ENCODE measurements at regions of chr16 and their contacts with region 1.

Region 1: GRCh38 chr16:30650369-30651123 is at the start of gene PRR14:
- DNase-seq: peak; percentile 100
- H3K4me3 Mint-ChIP-seq: peak within 1 kb of the TSS; percentile 92
- H3K27ac Mint-ChIP-seq: peak within 1 kb of the TSS; percentile 96
- H3K4me1 Mint-ChIP-seq: peaks cover 21% of the 10 kb centered on the region
- H3K27me3 Mint-ChIP-seq: no peaks in the 10 kb centered on the region
- total RNA-seq, gene PRR14: 73.2 to 83.2 TPM

Region 2: GRCh38 chr16:30571695-30572600 is 78.6 kb before region 1 on chr16 and contains the start of gene ZNF688:
- CTCF ChIA-PET with region 1: interaction called, 3 read pairs
- POLR2A ChIA-PET with region 1: interaction called, 4 read pairs
- intact Hi-C with region 1: loop called (anchors 1 kb)
- DNase-seq: peak; percentile 96
- H3K4me3 Mint-ChIP-seq: peak within 1 kb of the TSS; percentile 91
- H3K27ac Mint-ChIP-seq: peak within 1 kb of the TSS; percentile 92
- H3K4me1 Mint-ChIP-seq: peaks cover 48% of the 10 kb centered on the region
- H3K27me3 Mint-ChIP-seq: no peaks in the 10 kb centered on the region
- total RNA-seq, gene ZNF688: 9.2 to 9.3 TPM

Region 3: DNA sequence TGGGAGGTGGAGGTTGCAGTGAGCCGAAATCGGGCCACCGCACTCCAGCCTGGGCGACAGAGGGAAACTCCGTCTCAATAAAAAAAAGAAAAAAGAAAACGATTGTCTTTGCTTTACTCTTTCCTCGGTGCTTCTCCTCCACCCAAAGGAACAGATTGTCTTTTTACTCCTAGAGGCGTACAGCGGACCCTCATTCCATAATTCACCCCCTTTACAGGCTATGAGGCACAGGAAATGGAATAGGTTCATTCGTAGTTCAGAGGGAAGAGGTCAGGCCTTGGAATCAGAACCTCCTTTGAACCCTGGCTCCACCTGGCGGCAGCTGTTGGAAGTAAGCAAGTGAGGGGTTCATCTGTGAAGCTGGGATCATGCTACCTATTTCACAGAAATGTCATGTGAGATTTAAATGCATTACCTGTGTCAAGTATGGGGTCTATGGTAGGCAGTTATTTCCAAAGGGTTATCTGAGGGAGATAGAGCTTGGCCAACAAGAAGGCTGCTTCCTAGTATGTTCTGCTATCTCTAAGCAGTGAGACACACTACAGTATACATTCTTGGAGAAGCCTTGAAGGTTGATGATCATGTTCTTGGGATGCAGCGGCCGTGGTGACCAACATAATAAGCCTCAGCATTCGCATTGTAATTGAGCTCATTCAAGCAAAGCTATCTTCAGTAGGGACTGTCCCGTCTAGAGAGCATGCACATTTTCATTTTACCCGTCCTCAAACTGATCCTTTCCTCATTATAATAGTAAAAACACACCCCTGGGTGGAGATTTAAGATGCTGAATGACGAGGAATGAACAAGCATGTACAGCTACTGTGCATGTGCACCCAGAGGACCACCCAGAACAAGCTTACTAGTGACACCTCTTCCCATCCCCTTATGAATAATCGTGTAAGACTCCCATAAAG is 21.7 kb before region 1 on chr16:
- CTCF ChIA-PET with region 1: interaction called, 8 read pairs
- POLR2A ChIA-PET with region 1: interaction called, 12 read pairs
- intact Hi-C with region 1: loop called (anchors 1 kb)
- DNase-seq: peak; percentile 94
- H3K4me3 Mint-ChIP-seq: peak overlapping the region; percentile 60
- H3K27ac Mint-ChIP-seq: peak overlapping the region; percentile 57
- H3K4me1 Mint-ChIP-seq: peaks cover 4% of the 10 kb centered on the region
- H3K27me3 Mint-ChIP-seq: no peaks in the 10 kb centered on the region

Region 4: GRCh38 chr16:30698139-30698815 is 47.7 kb after region 1 on chr16:
- CTCF ChIA-PET with region 1: interaction called, 23 read pairs
- POLR2A ChIA-PET with region 1: interaction called, 5 read pairs
- intact Hi-C with region 1: loop called (anchors 2 kb)
- DNase-seq: peak; percentile 99
- H3K4me3 Mint-ChIP-seq: peak overlapping the region; percentile 96
- H3K27ac Mint-ChIP-seq: peak overlapping the region; percentile 99
- H3K4me1 Mint-ChIP-seq: peaks cover 29% of the 10 kb centered on the region
- H3K27me3 Mint-ChIP-seq: no peaks in the 10 kb centered on the region